ENCODE measurements at regions of chr4 and their contacts with region 1.

Region 1: GRCh38 chr4:168585168-168586091 is 88.6 kb downstream of the PALLD start:
- DNase-seq: peak; percentile 20
- ATAC-seq: peak; percentile 100
- H3K4me3 ChIP-seq: no peak overlapping the region
- H3K27ac ChIP-seq: no peak overlapping the region
- H3K4me1 ChIP-seq: no peaks in the 10 kb centered on the region
- H3K27me3 ChIP-seq: peaks cover 0 to 3% of the 10 kb centered on the region in 2 experiments; a peak in 1 of 5 replicates
- CTCF ChIP-seq: peak; percentile 65
- EP300 ChIP-seq: no peak
- POLR2A ChIP-seq: no peak
- RAD21 ChIP-seq: peak; percentile 46; the same call in 1 of the 2 replicates

Region 2: GRCh38 chr4:168398589-168398988 is 186.8 kb before region 1 on chr4:
- CTCF ChIA-PET with region 1: no interaction called
- POLR2A ChIA-PET with region 1: no interaction called
- in situ Hi-C with region 1: no loop called
- intact Hi-C with region 1: no loop called
- DNase-seq: no peak
- ATAC-seq: no peak
- H3K4me3 ChIP-seq: no peak overlapping the region
- H3K27ac ChIP-seq: no peak overlapping the region
- H3K4me1 ChIP-seq: no peaks in the 10 kb centered on the region
- H3K27me3 ChIP-seq: no peaks in the 10 kb centered on the region
- CTCF ChIP-seq: no peak
- EP300 ChIP-seq: no peak
- POLR2A ChIP-seq: no peak
- RAD21 ChIP-seq: no peak

Region 3: GRCh38 chr4:168426350-168426749 is 159.1 kb before region 1 on chr4:
- CTCF ChIA-PET with region 1: no interaction called
- POLR2A ChIA-PET with region 1: no interaction called
- in situ Hi-C with region 1: no loop called
- intact Hi-C with region 1: no loop called
- DNase-seq: no peak
- ATAC-seq: no peak
- H3K4me3 ChIP-seq: no peak overlapping the region
- H3K27ac ChIP-seq: no peak overlapping the region
- H3K4me1 ChIP-seq: no peaks in the 10 kb centered on the region
- H3K27me3 ChIP-seq: no peaks in the 10 kb centered on the region; a peak in 1 of 5 replicates
- CTCF ChIP-seq: no peak
- EP300 ChIP-seq: no peak
- POLR2A ChIP-seq: no peak
- RAD21 ChIP-seq: no peak

Region 4: DNA sequence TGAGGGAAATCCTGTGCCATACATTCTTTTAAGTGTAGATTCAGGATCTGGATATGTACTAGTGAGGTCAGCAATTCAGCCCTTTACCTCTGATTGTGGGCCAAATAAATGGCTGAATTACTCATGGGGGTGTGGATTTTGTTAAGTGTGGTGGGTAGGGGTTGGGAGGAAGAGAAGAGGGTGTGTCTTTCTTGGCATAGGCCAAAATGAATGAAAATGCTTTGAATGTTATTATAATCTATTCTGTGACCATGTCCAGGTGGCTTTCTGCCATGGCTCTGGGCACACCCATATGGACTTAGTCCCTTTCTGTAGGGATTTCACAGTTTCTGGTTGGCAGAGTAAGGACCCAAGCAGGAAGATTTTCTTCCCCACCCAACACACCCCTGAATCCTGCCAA is 180.3 kb after region 1 on chr4:
- CTCF ChIA-PET with region 1: no interaction called
- POLR2A ChIA-PET with region 1: no interaction called
- in situ Hi-C with region 1: no loop called
- intact Hi-C with region 1: no loop called
- DNase-seq: no peak
- ATAC-seq: no peak
- H3K4me3 ChIP-seq: no peak overlapping the region
- H3K27ac ChIP-seq: no peak overlapping the region
- H3K4me1 ChIP-seq: no peaks in the 10 kb centered on the region
- H3K27me3 ChIP-seq: peaks cover 0 to 3% of the 10 kb centered on the region in 2 experiments; a peak in 2 of 5 replicates
- CTCF ChIP-seq: no peak
- EP300 ChIP-seq: no peak
- POLR2A ChIP-seq: no peak
- RAD21 ChIP-seq: no peak

Region 5: DNA sequence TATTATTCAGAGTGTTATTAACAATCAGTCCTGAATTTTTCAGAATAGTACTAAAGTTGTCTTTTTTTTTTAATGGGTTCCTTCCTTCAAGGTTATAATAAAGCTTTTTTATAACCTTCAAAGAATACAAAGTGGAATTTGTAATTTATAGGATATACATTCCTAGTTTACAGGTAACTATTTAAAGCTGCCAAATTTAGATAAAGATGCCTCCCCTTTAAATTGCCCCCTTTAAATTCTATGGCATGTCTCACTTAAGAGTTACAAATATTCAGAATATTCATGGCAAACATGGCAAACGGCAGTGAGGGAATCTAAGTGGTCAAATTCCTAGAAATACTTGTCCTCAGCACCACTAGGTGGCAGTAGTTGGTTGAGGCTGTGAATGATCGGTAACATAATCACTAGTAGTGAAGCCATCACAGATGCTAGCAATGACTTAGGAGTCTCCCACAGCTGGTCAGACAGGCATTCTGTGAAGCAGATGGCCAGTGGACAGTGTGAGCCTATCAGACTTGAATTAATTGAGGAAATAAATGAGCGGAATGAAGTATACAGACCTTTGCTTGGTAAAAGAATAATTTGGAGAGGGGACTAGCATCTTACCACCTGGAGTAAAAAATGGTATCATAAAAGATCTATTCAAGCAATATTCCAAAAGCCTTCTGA is 338.2 kb after region 1 on chr4:
- CTCF ChIA-PET with region 1: interaction called, 4 read pairs
- POLR2A ChIA-PET with region 1: no interaction called
- in situ Hi-C with region 1: loop called (anchors 25 kb)
- intact Hi-C with region 1: no loop called
- DNase-seq: peak; percentile 62
- ATAC-seq: peak; percentile 76
- H3K4me3 ChIP-seq: no peak overlapping the region
- H3K27ac ChIP-seq: no peak overlapping the region
- H3K4me1 ChIP-seq: peaks cover 30% of the 10 kb centered on the region
- H3K27me3 ChIP-seq: no peaks in the 10 kb centered on the region
- CTCF ChIP-seq: peak; percentile 89
- EP300 ChIP-seq: no peak
- POLR2A ChIP-seq: no peak
- RAD21 ChIP-seq: peak; percentile 72

Measured in HepG2 (cell line).